CD8-positive, alpha-beta T cell (primary cell): ENCODE measurements at regions of chrX and their contacts with region 1.

Region 1: GRCh38 chrX:46903458-46904242 is 8.6 kb upstream of the JADE3 start:
- DNase-seq: peak in 8 of 9 experiments; percentile 17 to 67 (median 45)
- ATAC-seq: peak; percentile 77
- H3K4me3 ChIP-seq: peak overlapping the region in 1 of 2 experiments; percentile 28
- H3K4me3 Mint-ChIP-seq: peak overlapping the region; percentile 39
- H3K27ac ChIP-seq: no peak overlapping the region
- H3K27ac Mint-ChIP-seq: no peak overlapping the region
- H3K4me1 ChIP-seq: peaks cover 5% of the 10 kb centered on the region
- H3K4me1 Mint-ChIP-seq: no peaks in the 10 kb centered on the region
- H3K27me3 ChIP-seq: no peaks in the 10 kb centered on the region
- H3K27me3 Mint-ChIP-seq: peaks cover 6% of the 10 kb centered on the region
- CTCF ChIP-seq: no peak

Region 2: DNA sequence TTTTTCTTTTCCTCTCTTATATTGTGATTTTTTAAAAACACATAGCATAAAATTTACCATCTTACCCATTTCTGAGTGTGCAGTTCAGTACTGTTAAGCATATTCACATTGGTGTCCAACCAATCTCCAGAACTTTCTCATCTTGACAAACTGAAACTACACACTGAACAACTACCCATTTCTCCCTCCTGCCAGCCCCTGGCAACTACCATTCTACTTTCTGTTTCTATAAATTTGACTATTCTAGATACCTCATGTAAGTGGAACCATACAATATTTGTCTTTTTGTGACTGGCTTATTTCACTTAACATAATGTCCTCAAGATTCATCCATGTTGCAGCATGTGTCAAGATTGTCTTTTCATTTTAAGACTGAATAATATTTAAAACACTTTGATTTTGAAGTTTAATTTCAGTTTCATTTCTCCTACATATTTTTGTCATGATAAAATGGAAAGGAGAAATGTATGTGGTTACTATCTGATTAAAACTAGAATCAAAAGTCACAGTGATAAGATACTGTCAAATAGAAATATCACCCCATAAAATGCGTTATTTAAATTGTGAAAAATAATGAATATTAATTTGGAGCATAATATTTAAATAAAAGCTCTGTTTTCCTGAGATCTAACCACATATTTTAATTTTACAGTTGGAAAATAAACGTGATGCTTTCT is 1825.8 kb before region 1 on chrX:
- CTCF ChIA-PET with region 1: no interaction called
- POLR2A ChIA-PET with region 1: no interaction called
- intact Hi-C with region 1: no loop called
- DNase-seq: peak in 1 of 9 experiments; percentile 23
- ATAC-seq: no peak
- H3K4me3 ChIP-seq: no peak overlapping the region
- H3K4me3 Mint-ChIP-seq: peak overlapping the region; percentile 45
- H3K27ac ChIP-seq: no peak overlapping the region
- H3K27ac Mint-ChIP-seq: peak overlapping the region; percentile 69
- H3K4me1 ChIP-seq: peaks cover 3% of the 10 kb centered on the region
- H3K4me1 Mint-ChIP-seq: peaks cover 27% of the 10 kb centered on the region
- H3K27me3 ChIP-seq: no peaks in the 10 kb centered on the region
- H3K27me3 Mint-ChIP-seq: no peaks in the 10 kb centered on the region
- CTCF ChIP-seq: no peak

Region 3: GRCh38 chrX:46366381-46367207 is 537.1 kb before region 1 on chrX:
- CTCF ChIA-PET with region 1: no interaction called
- POLR2A ChIA-PET with region 1: no interaction called
- intact Hi-C with region 1: no loop called
- DNase-seq: no peak
- ATAC-seq: no peak
- H3K4me3 ChIP-seq: no peak overlapping the region
- H3K4me3 Mint-ChIP-seq: no peak overlapping the region
- H3K27ac ChIP-seq: no peak overlapping the region
- H3K27ac Mint-ChIP-seq: no peak overlapping the region
- H3K4me1 ChIP-seq: no peaks in the 10 kb centered on the region
- H3K4me1 Mint-ChIP-seq: no peaks in the 10 kb centered on the region
- H3K27me3 ChIP-seq: no peaks in the 10 kb centered on the region
- H3K27me3 Mint-ChIP-seq: no peaks in the 10 kb centered on the region
- CTCF ChIP-seq: no peak

Region 4: GRCh38 chrX:46941341-46941740 is 37.7 kb after region 1 on chrX:
- CTCF ChIA-PET with region 1: no interaction called
- POLR2A ChIA-PET with region 1: no interaction called
- intact Hi-C with region 1: no loop called
- DNase-seq: no peak
- ATAC-seq: no peak
- H3K4me3 ChIP-seq: no peak overlapping the region
- H3K4me3 Mint-ChIP-seq: no peak overlapping the region
- H3K27ac ChIP-seq: no peak overlapping the region
- H3K27ac Mint-ChIP-seq: no peak overlapping the region
- H3K4me1 ChIP-seq: no peaks in the 10 kb centered on the region
- H3K4me1 Mint-ChIP-seq: no peaks in the 10 kb centered on the region
- H3K27me3 ChIP-seq: no peaks in the 10 kb centered on the region
- H3K27me3 Mint-ChIP-seq: peaks cover 2% of the 10 kb centered on the region
- CTCF ChIP-seq: no peak

Region 5: DNA sequence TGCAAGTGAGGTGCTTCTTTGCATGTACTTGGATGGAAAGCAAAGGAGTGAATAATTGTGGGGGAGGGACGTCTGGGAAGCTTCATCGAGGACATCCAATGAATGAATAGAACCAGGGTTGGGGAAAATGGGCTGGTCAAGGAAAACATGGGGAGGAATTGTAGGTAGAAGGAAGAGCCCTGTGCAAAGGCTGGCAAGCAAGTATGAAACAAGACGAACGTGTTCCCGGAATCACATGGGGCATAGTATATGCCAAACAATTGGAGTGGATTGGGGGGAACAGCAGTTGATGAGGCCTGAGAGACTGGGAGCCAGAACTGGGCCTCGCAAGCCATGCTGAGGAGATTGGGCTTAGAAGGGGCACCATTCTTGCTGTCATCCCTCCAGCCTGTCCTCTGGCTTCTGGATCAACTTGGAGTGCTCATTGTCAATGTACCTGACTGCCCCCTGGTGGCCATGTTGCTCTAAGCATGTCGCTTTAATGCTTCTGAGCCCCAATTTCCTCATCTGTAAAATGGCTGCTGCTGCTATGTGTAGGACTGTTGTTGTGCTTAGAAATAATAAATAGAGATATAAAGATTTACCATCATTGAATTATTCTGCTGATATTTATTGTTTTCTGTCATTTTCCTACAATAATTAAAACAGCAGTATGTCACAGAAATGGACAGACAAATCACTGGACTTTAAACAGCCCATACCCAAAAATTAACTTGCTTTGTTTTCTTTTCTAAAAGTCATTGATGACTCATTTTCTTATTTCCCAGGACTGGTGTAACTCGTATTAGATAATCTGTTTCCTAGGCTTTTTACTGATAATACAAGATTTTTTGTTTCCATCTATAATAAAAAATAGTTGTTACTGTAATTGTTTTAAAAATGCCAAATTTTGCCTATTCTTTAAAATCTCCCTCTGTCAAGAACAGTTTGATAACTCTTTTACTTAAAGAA is 75.0 kb after region 1 on chrX:
- CTCF ChIA-PET with region 1: interaction called, 7 read pairs
- POLR2A ChIA-PET with region 1: no interaction called
- intact Hi-C with region 1: loop called in 1 of 2 experiments (anchors 1 kb)
- DNase-seq: peak; percentile 23 to 75 (median 67)
- ATAC-seq: peak; percentile 67
- H3K4me3 ChIP-seq: no peak overlapping the region
- H3K4me3 Mint-ChIP-seq: no peak overlapping the region
- H3K27ac ChIP-seq: no peak overlapping the region
- H3K27ac Mint-ChIP-seq: no peak overlapping the region
- H3K4me1 ChIP-seq: no peaks in the 10 kb centered on the region
- H3K4me1 Mint-ChIP-seq: no peaks in the 10 kb centered on the region
- H3K27me3 ChIP-seq: no peaks in the 10 kb centered on the region
- H3K27me3 Mint-ChIP-seq: no peaks in the 10 kb centered on the region
- CTCF ChIP-seq: peak; percentile 57

Region 6: GRCh38 chrX:47030339-47030738 is 126.7 kb after region 1 on chrX:
- CTCF ChIA-PET with region 1: interaction called, 4 read pairs
- POLR2A ChIA-PET with region 1: no interaction called
- intact Hi-C with region 1: loop called in 1 of 2 experiments (anchors 10 kb)
- DNase-seq: peak in 3 of 9 experiments; percentile 11 to 57 (median 48)
- ATAC-seq: no peak
- H3K4me3 ChIP-seq: no peak overlapping the region
- H3K4me3 Mint-ChIP-seq: no peak overlapping the region
- H3K27ac ChIP-seq: no peak overlapping the region
- H3K27ac Mint-ChIP-seq: no peak overlapping the region
- H3K4me1 ChIP-seq: no peaks in the 10 kb centered on the region
- H3K4me1 Mint-ChIP-seq: no peaks in the 10 kb centered on the region
- H3K27me3 ChIP-seq: no peaks in the 10 kb centered on the region
- H3K27me3 Mint-ChIP-seq: no peaks in the 10 kb centered on the region
- CTCF ChIP-seq: peak; percentile 35

Region 7: GRCh38 chrX:47093248-47093647 is 189.6 kb after region 1 on chrX:
- CTCF ChIA-PET with region 1: interaction called, 7 read pairs
- POLR2A ChIA-PET with region 1: no interaction called
- intact Hi-C with region 1: loop called in 1 of 2 experiments (anchors 10 kb)
- DNase-seq: peak in 2 of 9 experiments; percentile 28 to 34
- ATAC-seq: no peak
- H3K4me3 ChIP-seq: no peak overlapping the region
- H3K4me3 Mint-ChIP-seq: no peak overlapping the region
- H3K27ac ChIP-seq: no peak overlapping the region
- H3K27ac Mint-ChIP-seq: no peak overlapping the region
- H3K4me1 ChIP-seq: no peaks in the 10 kb centered on the region
- H3K4me1 Mint-ChIP-seq: peaks cover 9% of the 10 kb centered on the region
- H3K27me3 ChIP-seq: no peaks in the 10 kb centered on the region
- H3K27me3 Mint-ChIP-seq: no peaks in the 10 kb centered on the region
- CTCF ChIP-seq: peak; percentile 48

Region 8: DNA sequence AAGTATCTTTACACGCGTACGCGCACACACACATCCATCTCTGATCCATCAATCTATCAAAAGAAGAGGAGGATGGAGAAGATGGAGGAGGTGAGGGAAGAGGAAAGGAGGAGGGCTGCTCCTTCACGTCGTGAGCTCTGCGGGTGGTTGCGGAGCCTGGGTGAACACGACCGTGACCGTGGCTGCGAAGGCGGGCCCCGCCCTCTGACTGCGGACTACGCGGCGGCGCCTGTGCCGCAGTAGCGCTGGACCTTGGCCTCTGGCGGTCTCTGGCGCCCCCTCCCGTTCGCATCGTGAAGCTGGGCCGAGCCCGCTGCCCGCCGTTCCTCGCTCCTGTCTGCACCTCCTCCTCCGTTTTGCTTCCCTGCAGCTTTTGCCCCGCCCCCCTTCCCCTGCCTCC is 619.6 kb after region 1 on chrX:
- CTCF ChIA-PET with region 1: interaction called, 3 read pairs
- POLR2A ChIA-PET with region 1: no interaction called
- intact Hi-C with region 1: loop called in 1 of 2 experiments (anchors 2 kb)
- DNase-seq: peak; percentile 53 to 90 (median 78)
- ATAC-seq: peak; percentile 97
- H3K4me3 ChIP-seq: peak overlapping the region; percentile 47 to 49
- H3K4me3 Mint-ChIP-seq: peak overlapping the region; percentile 69
- H3K27ac ChIP-seq: no peak overlapping the region
- H3K27ac Mint-ChIP-seq: no peak overlapping the region
- H3K4me1 ChIP-seq: no peaks in the 10 kb centered on the region
- H3K4me1 Mint-ChIP-seq: peaks cover 5% of the 10 kb centered on the region
- H3K27me3 ChIP-seq: no peaks in the 10 kb centered on the region
- H3K27me3 Mint-ChIP-seq: no peaks in the 10 kb centered on the region
- CTCF ChIP-seq: peak; percentile 72